HCT116 (cell line): ENCODE measurements at regions of chr15 and their contacts with region 1.

Region 1: DNA sequence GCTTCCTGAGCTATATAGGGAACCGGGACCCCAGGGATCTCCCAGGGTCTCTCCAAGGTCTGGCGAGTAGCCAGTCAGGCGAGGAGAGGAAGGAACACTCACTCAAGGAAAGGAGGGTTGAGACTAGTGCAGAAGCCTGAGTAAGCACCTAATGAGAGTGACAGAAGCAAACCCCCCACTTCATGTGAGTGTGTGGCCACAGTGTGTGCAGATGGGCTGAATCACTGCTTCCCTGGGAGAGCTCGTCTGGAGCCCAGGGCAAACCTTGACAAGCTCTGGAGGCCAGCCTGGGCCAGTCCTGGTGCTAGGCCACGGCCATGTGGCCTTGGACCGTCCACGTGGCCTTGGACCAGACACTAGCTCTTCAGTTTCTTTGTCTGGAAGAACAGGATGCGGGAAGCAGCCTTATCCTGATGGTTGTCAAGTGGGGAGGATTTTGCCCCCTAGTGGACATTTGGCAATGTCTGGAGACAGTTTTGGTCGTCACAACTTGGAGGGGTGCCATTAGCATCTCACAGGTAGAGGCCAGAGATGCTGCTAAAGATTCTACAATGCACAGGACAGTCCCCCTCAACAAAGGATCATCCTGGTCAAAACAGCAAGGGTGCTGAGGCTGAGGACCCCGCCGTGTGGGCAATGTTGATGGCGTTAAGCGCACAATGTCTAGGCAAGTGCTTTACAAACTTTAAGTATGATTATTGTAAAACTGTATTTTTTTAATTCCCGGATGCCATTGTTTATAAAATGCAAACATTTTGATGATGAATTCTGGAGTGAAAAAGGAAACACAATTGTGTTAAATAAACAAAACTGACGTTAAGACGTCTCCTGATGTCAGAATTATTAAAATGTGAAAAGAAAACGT is 34.8 kb upstream of the CTSH start:
- DNase-seq: peak; percentile 81
- ATAC-seq: peak; percentile 94
- H3K4me3 ChIP-seq: no peak overlapping the region
- H3K27ac ChIP-seq: no peak overlapping the region; the same call in 1 of the 2 replicates
- H3K4me1 ChIP-seq: peaks cover 3 to 6% of the 10 kb centered on the region in 2 experiments; a peak in 3 of 4 replicates
- H3K27me3 ChIP-seq: no peaks in the 10 kb centered on the region
- CTCF ChIP-seq: peak; percentile 80 to 85 (median 84)
- POLR2A ChIP-seq: no peak
- RAD21 ChIP-seq: peak; percentile 90

Region 2: GRCh38 chr15:78909791-78910228 is 69.9 kb before region 1 on chr15:
- CTCF ChIA-PET with region 1: interaction called, 35 read pairs
- POLR2A ChIA-PET with region 1: interaction called, 4 read pairs
- RAD21 ChIA-PET with region 1: no interaction called
- intact Hi-C with region 1: loop called (anchors 1 kb)
- DNase-seq: peak; percentile 10
- ATAC-seq: peak; percentile 88
- H3K4me3 ChIP-seq: no peak overlapping the region
- H3K27ac ChIP-seq: no peak overlapping the region
- H3K4me1 ChIP-seq: no peaks in the 10 kb centered on the region
- H3K27me3 ChIP-seq: no peaks in the 10 kb centered on the region
- CTCF ChIP-seq: peak; percentile 63 to 82 (median 76); a peak in 5 of 6 replicates
- POLR2A ChIP-seq: no peak
- RAD21 ChIP-seq: peak; percentile 78

Region 3: DNA sequence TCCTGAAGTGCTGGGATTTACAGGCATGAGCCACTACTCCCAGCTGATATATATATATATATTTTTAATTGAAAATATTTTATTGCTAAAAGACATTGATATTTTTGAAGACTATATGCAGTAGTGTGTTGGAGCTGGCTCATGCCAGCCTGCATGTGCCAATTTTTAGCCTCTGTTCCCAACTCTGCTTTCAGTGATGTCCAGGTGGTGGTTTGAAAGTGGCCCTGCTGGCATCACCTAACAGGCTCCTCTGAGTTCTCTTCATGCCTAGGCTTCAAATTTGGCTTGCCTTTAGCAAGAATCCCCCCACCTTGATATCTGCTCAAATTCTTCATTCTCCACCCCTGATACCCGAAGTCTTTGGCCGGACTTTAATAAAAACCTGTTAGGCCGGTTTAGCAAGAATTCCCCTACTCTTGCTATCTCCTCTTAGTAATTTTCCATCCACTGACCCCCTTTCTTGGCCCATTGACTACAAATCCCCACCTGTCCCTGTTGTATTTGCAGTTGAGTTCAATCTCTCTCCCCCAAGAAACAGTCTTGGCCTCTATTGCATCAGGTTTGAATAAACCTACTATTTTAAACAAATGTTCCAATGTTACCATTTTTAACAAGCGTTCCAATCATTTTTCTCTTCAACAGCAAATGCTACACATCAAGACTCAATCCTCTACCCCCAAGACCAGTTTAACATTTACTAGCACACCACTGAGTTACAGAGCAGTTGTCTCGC is 11.0 kb before region 1 on chr15:
- CTCF ChIA-PET with region 1: interaction called, 13 read pairs
- POLR2A ChIA-PET with region 1: no interaction called
- RAD21 ChIA-PET with region 1: no interaction called
- intact Hi-C with region 1: no loop called
- DNase-seq: no peak
- ATAC-seq: peak; percentile 59; the same call in 1 of the 2 replicates
- H3K4me3 ChIP-seq: peak overlapping the region in 1 of 2 experiments; percentile 19; a peak in 2 of 4 replicates
- H3K27ac ChIP-seq: peak overlapping the region; percentile 40
- H3K4me1 ChIP-seq: peaks cover 25 to 30% of the 10 kb centered on the region in 2 experiments
- H3K27me3 ChIP-seq: no peaks in the 10 kb centered on the region
- CTCF ChIP-seq: no peak
- POLR2A ChIP-seq: no peak
- RAD21 ChIP-seq: no peak